Aorta (tissue), 5 donors: ENCODE measurements at regions of chr2 and their contacts with region 1.

Region 1: DNA sequence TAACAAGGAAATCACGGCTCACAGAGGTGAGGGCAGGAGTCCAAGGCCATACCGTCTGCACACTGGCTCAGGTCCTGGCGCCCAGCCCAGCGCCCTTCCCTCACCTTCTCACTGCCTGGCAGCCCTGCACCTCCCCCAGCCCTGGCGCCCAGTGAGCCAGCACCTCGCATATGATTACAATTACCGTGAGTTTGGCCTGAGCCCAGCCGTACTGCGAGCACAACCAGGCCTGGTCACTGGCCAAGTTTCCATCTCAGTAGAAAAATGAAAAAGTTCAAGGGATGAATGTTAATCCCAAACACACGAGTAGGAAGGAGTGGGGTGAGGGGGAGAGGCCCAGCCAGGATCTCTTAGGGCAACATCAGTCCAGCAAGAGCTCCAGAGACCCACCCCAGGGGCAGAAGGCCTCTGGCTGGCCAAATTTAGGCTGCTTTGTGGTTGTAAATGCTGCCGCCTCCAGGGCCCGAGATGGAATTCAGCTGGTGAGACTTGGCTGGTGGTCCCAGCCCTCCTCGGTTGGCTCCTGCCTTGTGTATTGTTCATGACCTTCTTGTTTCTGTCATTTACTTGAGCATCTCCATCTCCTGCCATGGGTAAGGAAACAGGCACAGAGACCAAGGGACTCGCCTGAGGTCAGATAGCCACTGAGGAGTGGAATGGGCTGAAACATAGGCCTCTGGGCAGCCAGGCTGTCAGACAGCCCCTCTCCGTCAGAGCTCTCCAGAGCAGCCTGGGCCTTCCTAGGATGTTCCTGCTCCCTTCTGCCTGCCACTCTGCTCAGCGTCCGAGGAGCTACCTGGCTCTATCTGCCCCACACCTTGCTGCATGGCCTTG is 68.2 kb downstream of the MCFD2 start:
- DNase-seq: peak; percentile 93 to 95
- ATAC-seq: peak; percentile 83
- H3K4me3 ChIP-seq: no peak overlapping the region
- H3K27ac ChIP-seq: peak overlapping the region; percentile 85 to 91
- H3K4me1 ChIP-seq: peaks cover 4 to 21% of the 10 kb centered on the region in 2 donors
- H3K27me3 ChIP-seq: no peaks in the 10 kb centered on the region

Region 2: GRCh38 chr2:46803911-46804670 is 43.4 kb before region 1 on chr2:
- intact Hi-C with region 1: loop called in 1 of 2 experiments (anchors 10 kb)
- DNase-seq: peak; percentile 68 to 82
- ATAC-seq: no peak
- H3K4me3 ChIP-seq: no peak overlapping the region
- H3K27ac ChIP-seq: no peak overlapping the region
- H3K4me1 ChIP-seq: no peaks in the 10 kb centered on the region
- H3K27me3 ChIP-seq: no peaks in the 10 kb centered on the region

Region 3: GRCh38 chr2:46812361-46813024 is 35.0 kb before region 1 on chr2:
- intact Hi-C with region 1: loop called (anchors 5 to 10 kb)
- DNase-seq: peak; percentile 89 to 90
- ATAC-seq: peak; percentile 69
- H3K4me3 ChIP-seq: no peak overlapping the region
- H3K27ac ChIP-seq: no peak overlapping the region
- H3K4me1 ChIP-seq: peaks cover 3 to 13% of the 10 kb centered on the region in 2 donors
- H3K27me3 ChIP-seq: no peaks in the 10 kb centered on the region

Region 4: DNA sequence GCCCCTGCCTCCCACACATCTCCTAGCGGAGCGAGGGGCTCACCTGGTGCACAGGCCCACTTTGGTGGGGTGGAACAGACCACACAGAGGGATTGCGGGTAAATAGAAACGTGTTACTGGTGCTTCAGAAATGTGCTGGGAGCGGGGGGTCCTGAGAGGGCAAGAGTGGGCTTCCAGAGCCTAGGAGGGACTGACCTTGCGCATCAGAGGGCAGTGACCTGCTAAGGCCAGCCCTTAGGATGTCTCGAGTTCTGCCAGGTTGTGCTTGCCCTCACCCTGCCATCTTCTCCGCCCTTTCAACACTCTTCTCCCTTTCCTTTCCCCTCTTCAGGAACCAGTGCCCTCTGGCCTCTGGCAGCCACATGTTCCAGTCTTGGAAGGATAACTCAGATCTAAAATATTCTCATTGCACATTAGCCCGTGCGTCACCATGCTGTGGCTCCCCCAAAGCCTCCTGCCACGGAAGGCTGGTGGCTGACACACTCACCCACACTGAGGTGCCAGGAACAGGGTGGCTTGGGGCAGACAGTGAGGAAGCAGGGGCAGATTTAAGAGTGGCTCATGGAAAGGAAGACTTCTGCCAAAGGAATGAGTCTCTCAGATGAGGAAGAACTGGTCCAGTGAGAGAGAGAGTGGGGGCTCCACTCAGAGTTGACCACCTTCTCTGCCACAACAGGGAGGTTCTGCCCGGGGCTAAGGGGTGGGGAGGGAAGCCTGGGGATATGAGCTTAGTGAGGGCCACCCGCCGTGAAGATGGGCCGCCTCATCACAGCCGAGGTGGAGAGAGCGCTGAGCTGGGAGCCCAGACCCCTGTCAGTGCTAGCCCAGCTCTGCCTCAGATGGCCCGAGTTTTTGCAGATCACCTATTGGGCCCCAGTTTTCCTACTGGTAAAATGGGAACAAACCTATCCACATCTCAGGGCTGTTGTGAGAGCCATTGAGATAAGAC is 21.2 kb before region 1 on chr2:
- intact Hi-C with region 1: no loop called
- DNase-seq: no peak
- ATAC-seq: no peak
- H3K4me3 ChIP-seq: no peak overlapping the region
- H3K27ac ChIP-seq: no peak overlapping the region
- H3K4me1 ChIP-seq: no peaks in the 10 kb centered on the region
- H3K27me3 ChIP-seq: no peaks in the 10 kb centered on the region

Region 5: GRCh38 chr2:46876741-46877384 is 29.4 kb after region 1 on chr2:
- intact Hi-C with region 1: loop called in 1 of 2 experiments (anchors 1 kb)
- DNase-seq: no peak
- ATAC-seq: peak; percentile 19
- H3K4me3 ChIP-seq: no peak overlapping the region
- H3K27ac ChIP-seq: no peak overlapping the region
- H3K4me1 ChIP-seq: no peaks in the 10 kb centered on the region
- H3K27me3 ChIP-seq: no peaks in the 10 kb centered on the region